GM10248 (cell line): ENCODE measurements at regions of chr1 and their contacts with region 1.

Region 1: GRCh38 chr1:96845464-96845863 is 123.9 kb downstream of the PTBP2 start:
- DNase-seq: peak; percentile 44
- CTCF ChIP-seq: peak; percentile 77

Region 2: DNA sequence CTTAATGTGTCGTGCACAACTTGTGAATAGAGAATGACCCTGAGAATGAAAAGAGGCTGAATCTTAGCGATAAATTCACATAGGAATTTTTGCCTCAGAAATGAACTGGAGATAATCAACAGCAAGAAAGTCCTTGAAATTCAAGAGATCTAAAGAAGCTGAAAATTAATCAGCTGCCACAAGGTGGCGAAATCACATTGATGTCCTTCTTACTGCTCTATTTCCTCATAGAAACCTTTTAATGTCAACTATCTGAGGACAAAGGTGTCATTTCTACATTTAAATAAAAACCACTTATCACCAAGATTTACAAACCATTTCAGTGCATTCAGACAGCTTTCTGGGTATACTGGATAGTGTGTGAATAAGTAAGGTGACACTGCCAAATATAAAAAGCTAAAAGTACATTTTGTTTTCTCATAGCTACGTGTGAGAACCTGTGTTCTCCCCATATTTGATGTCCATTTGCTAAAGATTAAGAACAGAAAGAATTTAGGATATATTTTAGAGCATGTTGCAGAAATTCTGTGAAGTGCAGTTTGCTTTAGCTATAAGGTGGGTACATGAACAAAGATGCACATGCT is 609.2 kb before region 1 on chr1:
- CTCF ChIA-PET with region 1: interaction called, 18 read pairs
- POLR2A ChIA-PET with region 1: no interaction called
- DNase-seq: peak; percentile 10
- CTCF ChIP-seq: peak; percentile 51

Region 3: GRCh38 chr1:96721416-96722160 is 123.9 kb before region 1 on chr1 and contains the start of gene PTBP2:
- CTCF ChIA-PET with region 1: no interaction called
- POLR2A ChIA-PET with region 1: no interaction called
- DNase-seq: peak; percentile 93
- CTCF ChIP-seq: no peak

Region 4: DNA sequence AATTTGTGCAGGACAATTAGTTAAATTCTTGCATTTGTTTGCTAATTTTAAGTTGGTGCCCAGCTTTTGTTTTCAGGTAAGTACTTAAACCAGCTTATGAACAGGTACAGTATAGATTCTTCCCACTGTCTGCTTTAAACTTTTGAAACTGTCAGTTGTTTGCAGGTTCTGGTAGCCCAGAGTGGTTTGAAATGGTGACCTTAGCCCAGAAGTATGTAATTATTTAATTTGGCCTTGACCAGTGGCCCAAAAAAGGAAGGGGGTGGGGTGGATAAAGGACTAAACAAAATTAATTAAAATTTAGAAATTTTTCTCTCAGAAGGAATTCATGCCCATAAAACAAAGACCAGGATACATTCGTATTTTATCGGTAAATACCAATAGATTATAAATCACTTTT is 54.9 kb before region 1 on chr1:
- CTCF ChIA-PET with region 1: no interaction called
- POLR2A ChIA-PET with region 1: no interaction called
- DNase-seq: no peak
- CTCF ChIP-seq: no peak

Region 5: GRCh38 chr1:96901783-96902363 is 56.4 kb after region 1 on chr1:
- CTCF ChIA-PET with region 1: no interaction called
- POLR2A ChIA-PET with region 1: no interaction called
- DNase-seq: no peak
- CTCF ChIP-seq: no peak

Region 6: DNA sequence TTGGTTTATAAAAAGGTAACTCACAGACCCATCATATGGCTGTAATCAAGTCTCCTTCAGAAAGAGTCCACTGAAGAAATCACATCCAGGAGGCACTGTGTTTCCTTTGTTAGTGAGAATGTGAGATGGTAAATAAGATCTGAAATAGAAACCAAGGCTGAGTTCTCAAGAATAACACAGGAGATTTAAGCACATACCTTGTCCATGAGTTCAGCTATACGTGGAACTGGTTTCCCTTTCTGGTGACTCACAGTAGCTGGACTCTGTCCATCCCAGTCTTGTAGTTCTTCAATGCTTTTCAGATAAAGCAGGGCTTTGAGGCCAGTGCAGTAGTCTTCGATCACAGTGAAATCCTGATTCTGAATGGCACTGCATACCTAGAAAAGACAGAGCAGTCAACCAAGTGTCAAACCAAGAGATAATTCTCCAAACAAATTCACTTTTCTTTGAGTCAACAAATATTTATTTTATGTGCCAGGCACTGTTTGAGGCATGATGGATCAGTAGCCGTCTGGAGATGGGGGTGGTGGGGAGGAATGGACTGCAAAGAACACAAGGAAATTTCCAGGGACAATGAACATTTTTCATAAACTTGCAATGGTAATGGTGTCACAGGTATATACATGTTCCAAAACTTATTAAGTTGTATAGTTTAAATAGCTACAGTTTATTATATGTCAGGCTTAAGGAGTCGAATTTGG is 347.6 kb after region 1 on chr1:
- CTCF ChIA-PET with region 1: no interaction called
- POLR2A ChIA-PET with region 1: no interaction called
- DNase-seq: no peak
- CTCF ChIP-seq: no peak